GM12878 (cell line): ENCODE measurements at regions of chr5 and their contacts with region 1.

Region 1: GRCh38 chr5:66171349-66172344 is 27.5 kb downstream of the SREK1 start:
- DNase-seq: no peak
- ATAC-seq: peak; percentile 70
- H3K4me3 ChIP-seq: no peak overlapping the region
- H3K27ac ChIP-seq: no peak overlapping the region
- H3K4me1 ChIP-seq: no peaks in the 10 kb centered on the region; the same call in 1 of the 2 replicates
- H3K27me3 ChIP-seq: no peaks in the 10 kb centered on the region
- CTCF ChIP-seq: peak; percentile 27 to 57 (median 40); a peak in 5 of 6 replicates
- EP300 ChIP-seq: no peak
- POLR2A ChIP-seq: no peak
- RAD21 ChIP-seq: peak; percentile 36; the same call in 1 of the 2 replicates

Region 2: DNA sequence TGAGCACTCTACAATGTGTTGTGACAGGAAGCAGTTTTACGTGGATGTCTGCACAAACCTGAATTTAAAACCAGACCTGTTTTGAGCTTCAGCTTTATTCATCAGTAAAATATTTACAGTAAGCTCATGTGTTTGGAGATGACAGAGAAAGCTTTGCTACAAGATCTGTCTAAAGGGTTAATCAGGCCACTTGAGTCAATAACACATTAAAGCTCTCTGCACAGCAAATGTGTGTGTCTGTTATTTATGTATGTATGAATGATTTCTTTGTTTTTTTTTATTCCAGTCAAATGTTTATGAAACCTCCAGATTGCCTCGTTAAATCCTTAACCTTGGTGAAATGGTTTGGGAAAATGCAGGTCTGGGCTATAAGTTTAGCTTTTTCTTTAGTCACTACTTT is 104.8 kb before region 1 on chr5:
- CTCF ChIA-PET with region 1: no interaction called
- POLR2A ChIA-PET with region 1: no interaction called
- RAD21 ChIA-PET with region 1: no interaction called
- SMC1A ChIA-PET with region 1: no interaction called
- in situ Hi-C with region 1: no loop called
- intact Hi-C with region 1: no loop called
- DNase-seq: no peak
- ATAC-seq: no peak
- H3K4me3 ChIP-seq: no peak overlapping the region
- H3K27ac ChIP-seq: no peak overlapping the region
- H3K4me1 ChIP-seq: no peaks in the 10 kb centered on the region
- H3K27me3 ChIP-seq: no peaks in the 10 kb centered on the region
- CTCF ChIP-seq: no peak
- EP300 ChIP-seq: no peak
- POLR2A ChIP-seq: no peak
- RAD21 ChIP-seq: no peak

Region 3: DNA sequence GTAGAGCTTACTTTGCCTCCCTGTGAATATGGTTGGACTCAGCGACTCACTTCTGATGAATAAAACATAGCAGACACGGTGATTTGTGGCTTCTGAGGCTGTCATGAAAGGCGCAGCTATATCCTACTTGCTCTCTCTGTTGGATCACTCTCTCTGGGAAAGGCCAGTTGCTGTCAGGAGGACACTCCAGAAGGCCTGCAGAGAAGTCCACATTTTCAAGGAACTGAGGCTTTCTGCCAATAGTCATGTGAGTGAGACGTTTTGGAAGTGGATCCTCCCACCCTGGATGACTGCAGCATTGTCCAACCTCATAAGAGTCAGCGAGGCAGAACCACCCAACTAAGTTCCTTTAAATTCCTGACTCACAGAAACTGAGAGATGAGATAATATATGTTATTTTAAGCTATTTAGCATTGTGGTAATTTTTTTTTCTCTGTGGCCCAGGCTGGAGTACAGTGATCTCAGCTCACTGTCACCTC is 268.6 kb after region 1 on chr5:
- CTCF ChIA-PET with region 1: no interaction called
- POLR2A ChIA-PET with region 1: no interaction called
- RAD21 ChIA-PET with region 1: no interaction called
- SMC1A ChIA-PET with region 1: no interaction called
- in situ Hi-C with region 1: no loop called
- intact Hi-C with region 1: no loop called
- DNase-seq: no peak
- ATAC-seq: peak; percentile 74
- H3K4me3 ChIP-seq: no peak overlapping the region
- H3K27ac ChIP-seq: no peak overlapping the region
- H3K4me1 ChIP-seq: no peaks in the 10 kb centered on the region
- H3K27me3 ChIP-seq: no peaks in the 10 kb centered on the region
- CTCF ChIP-seq: no peak
- EP300 ChIP-seq: no peak
- POLR2A ChIP-seq: no peak
- RAD21 ChIP-seq: no peak

Region 4: GRCh38 chr5:66498791-66499207 is 327.2 kb after region 1 on chr5:
- CTCF ChIA-PET with region 1: no interaction called
- POLR2A ChIA-PET with region 1: no interaction called
- RAD21 ChIA-PET with region 1: no interaction called
- SMC1A ChIA-PET with region 1: no interaction called
- in situ Hi-C with region 1: no loop called
- intact Hi-C with region 1: no loop called
- DNase-seq: no peak
- ATAC-seq: peak; percentile 53; the same call in 2 of the 3 replicates
- H3K4me3 ChIP-seq: no peak overlapping the region
- H3K27ac ChIP-seq: no peak overlapping the region
- H3K4me1 ChIP-seq: no peaks in the 10 kb centered on the region
- H3K27me3 ChIP-seq: no peaks in the 10 kb centered on the region
- CTCF ChIP-seq: peak in 2 of 3 experiments; percentile 20 to 35; a peak in 3 of 6 replicates
- EP300 ChIP-seq: no peak
- POLR2A ChIP-seq: no peak
- RAD21 ChIP-seq: peak; percentile 47

Region 5: DNA sequence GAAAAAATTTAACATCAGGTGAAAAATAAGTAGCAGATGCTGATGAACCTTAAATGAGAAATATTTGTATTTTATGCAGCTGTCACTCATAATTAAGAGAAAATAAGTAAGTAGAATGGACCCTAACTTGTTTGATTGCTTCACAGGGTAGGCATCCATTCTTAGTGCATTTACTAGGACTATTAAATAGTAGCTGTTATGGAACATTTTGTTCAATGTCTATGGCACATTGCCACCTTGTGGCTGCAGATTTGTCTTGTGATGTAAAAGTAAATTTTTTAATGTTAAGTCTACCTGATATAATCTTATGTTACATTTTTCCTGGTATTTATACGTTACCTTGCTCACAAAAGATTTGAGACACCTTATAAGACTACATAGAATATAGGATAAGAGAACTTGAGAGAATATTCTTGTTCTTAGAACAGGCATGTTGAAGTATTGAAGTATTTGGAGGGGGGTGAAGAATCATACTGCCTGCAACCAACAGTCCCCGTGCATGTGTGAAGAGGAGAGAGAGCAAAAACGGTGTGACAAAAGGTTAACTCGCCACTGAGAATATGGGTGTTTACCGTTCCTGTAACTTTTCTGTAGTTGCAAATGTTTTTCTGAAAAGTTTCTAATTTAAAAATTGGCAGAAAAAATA is 585.7 kb after region 1 on chr5:
- CTCF ChIA-PET with region 1: interaction called, 3 read pairs
- POLR2A ChIA-PET with region 1: no interaction called
- RAD21 ChIA-PET with region 1: no interaction called
- SMC1A ChIA-PET with region 1: no interaction called
- in situ Hi-C with region 1: no loop called
- intact Hi-C with region 1: loop called (anchors 5 kb)
- DNase-seq: no peak
- ATAC-seq: peak; percentile 46
- H3K4me3 ChIP-seq: no peak overlapping the region
- H3K27ac ChIP-seq: no peak overlapping the region
- H3K4me1 ChIP-seq: no peaks in the 10 kb centered on the region
- H3K27me3 ChIP-seq: no peaks in the 10 kb centered on the region
- CTCF ChIP-seq: peak; percentile 32 to 55 (median 47); a peak in 5 of 6 replicates
- EP300 ChIP-seq: no peak
- POLR2A ChIP-seq: no peak
- RAD21 ChIP-seq: peak; percentile 78